Activated naive CD4-positive, alpha-beta T cell treated with anti-CD3 and anti-CD28 coated beads for 36 hours (primary cell): ENCODE measurements at regions of chr3 and their contacts with region 1.

Region 1: DNA sequence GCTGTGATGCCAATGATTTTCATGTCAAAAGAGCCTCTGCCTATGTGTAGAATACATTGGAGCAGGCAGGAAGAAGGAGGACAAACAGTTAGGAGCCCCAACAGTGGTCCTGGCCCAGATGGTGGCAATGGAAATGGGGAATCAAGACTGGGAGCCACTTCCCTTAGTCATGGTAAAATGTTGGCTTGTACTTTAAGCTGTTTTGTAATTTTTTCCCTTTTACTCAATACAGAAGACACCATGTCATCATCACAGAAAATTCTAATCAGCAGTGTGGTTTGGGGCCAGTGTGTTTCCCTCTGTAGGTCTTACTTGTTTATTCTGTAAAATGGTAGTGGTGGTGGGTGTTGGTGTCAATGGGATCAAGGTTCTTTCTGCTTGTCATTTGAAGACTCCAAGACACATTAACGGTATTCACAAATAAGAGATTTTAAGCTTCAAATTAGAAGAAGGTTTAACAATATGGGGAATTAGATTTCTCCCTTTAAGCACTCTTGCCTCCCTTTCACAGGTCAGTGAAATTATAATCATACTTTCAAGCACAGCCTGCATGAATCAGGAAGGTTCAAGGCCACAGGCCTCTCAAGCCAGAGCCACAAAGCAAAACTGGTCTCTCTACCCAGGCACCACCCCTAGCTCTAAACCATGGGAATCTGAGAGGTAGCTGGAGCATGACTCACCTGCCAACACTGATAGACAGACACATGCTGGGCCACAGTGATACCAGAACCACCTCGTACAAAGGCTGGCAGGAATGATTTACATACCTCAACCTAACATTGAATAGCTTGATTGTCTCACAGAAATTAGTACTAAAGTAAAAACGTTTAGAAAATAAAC is 24.9 kb downstream of the SIAH2 start:
- DNase-seq: peak; percentile 81
- H3K4me3 Mint-ChIP-seq: peak overlapping the region; percentile 41
- H3K27ac Mint-ChIP-seq: peak overlapping the region; percentile 99
- H3K4me1 Mint-ChIP-seq: peaks cover 77% of the 10 kb centered on the region
- H3K27me3 Mint-ChIP-seq: no peaks in the 10 kb centered on the region

Region 2: DNA sequence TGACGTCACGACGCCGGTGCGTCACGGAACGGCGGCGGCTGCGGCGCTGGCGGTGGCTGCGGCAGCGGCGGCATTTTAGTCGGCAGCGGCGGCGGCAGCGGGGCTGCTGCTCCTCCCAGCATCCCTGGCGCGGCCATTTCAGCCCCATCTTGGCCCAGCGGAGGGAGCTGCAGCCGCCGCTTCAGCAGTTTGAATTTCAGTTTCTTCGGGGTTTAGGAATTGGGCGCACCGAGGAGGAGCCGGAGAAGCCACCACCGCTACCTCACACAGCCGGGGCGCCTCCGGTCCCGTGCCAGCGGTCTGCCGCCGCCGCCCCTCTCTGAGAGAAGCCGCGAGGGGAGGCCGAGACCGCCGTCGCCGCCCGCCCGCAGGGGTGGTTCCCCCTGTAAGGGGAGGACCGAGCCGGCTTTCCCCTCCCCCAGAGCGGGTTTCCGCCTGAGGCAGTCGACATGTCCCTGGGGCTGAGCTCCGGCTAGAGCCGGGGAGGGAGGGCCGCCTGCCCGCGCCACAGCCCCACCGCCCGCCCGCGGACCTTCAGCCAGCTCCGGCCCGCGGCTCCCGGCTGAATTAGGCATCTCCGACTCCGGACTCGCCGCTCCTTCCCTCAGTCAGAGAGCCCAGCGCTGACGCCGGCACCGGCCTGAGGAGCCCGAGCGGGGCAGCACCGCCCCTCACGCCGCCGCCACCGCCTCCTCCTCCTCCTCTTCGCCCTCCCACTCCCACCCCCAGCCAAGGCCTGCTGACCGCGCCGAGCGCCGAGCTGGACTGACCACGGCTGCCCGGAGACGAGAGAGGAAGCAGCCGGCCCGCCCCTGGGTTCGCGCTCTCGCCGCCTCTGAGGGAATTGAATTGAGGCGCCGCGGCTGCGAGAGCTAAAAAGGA is 329.6 kb before region 1 on chr3 and contains the start of gene TSC22D2:
- CTCF ChIA-PET with region 1: no interaction called
- intact Hi-C with region 1: loop called (anchors 1 kb)
- DNase-seq: peak; percentile 96
- H3K4me3 Mint-ChIP-seq: peak within 1 kb of the TSS; percentile 77
- H3K27ac Mint-ChIP-seq: peak within 1 kb of the TSS; percentile 99
- H3K4me1 Mint-ChIP-seq: peaks cover 23% of the 10 kb centered on the region
- H3K27me3 Mint-ChIP-seq: no peaks in the 10 kb centered on the region
- total RNA-seq, gene TSC22D2: 13.0 to 13.7 TPM

Region 3: GRCh38 chr3:150603153-150603979 is 134.7 kb before region 1 on chr3 and contains the start of gene SELENOT:
- CTCF ChIA-PET with region 1: no interaction called
- intact Hi-C with region 1: loop called (anchors 1 kb)
- DNase-seq: peak; percentile 93
- H3K4me3 Mint-ChIP-seq: peak within 1 kb of the TSS; percentile 96
- H3K27ac Mint-ChIP-seq: peak within 1 kb of the TSS; percentile 97
- H3K4me1 Mint-ChIP-seq: peaks cover 59% of the 10 kb centered on the region
- H3K27me3 Mint-ChIP-seq: no peaks in the 10 kb centered on the region
- total RNA-seq, gene SELENOT: 68.4 to 71.2 TPM

Region 4: DNA sequence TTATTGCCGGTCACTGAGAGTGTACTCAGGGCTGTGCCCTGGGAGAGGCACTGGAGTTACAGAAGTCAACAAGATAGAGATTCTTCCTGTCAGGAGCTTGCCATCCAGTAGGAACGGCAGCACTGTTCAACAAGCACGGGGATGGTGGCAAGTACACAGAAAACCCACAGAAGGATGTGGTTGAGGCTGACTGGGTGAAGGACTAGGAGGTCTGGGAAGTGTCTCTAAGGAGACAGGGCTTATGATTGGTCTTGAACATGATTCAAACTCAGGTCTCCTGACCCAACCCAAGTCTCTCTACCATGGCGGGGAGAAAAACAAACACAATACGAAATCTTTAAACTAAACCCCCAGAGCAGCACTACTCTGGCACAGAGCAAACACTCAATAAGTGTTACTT is 71.9 kb before region 1 on chr3:
- CTCF ChIA-PET with region 1: no interaction called
- intact Hi-C with region 1: no loop called
- DNase-seq: no peak
- H3K4me3 Mint-ChIP-seq: no peak overlapping the region
- H3K27ac Mint-ChIP-seq: no peak overlapping the region
- H3K4me1 Mint-ChIP-seq: no peaks in the 10 kb centered on the region
- H3K27me3 Mint-ChIP-seq: peaks cover 12% of the 10 kb centered on the region

Region 5: GRCh38 chr3:150703299-150704134 is 34.6 kb before region 1 on chr3 and contains the start of gene ERICH6:
- CTCF ChIA-PET with region 1: no interaction called
- intact Hi-C with region 1: loop called (anchors 1 kb)
- DNase-seq: peak; percentile 88
- H3K4me3 Mint-ChIP-seq: peak within 1 kb of the TSS; percentile 96
- H3K27ac Mint-ChIP-seq: no peak within 1 kb of the TSS
- H3K4me1 Mint-ChIP-seq: peaks cover 25% of the 10 kb centered on the region
- H3K27me3 Mint-ChIP-seq: no peaks in the 10 kb centered on the region
- total RNA-seq, gene ERICH6: not detected

Region 6: DNA sequence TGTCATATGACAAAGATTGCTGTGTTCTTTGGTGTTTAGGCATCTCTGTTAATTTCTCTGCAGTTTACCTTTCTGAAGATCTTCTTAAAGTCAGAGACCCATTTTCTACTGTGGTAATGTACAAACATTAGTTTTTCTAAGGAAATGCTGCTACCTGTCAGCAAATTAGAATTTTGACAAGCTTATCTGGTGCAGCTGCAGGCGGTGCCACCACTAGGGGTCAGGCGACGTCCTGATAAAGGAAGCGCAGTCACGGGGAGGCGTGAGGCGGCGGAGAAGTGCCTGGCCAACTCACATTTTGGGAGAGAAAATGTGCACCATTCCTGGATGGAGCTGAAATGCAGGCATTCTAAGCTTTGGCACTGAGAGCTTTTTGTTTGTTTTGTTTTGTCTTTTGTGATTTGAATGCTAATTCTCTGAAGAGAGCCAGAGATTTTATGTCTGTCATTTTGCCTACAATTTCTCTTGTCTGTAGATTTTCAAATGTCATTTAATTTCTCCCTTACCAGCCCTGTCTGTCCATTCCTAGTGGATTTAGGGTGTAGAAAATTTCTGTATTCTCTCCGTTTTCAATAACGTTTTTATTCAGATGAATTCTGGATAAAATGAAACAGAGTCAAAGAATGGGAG is 49.8 kb after region 1 on chr3:
- CTCF ChIA-PET with region 1: interaction called, 5 read pairs
- intact Hi-C with region 1: loop called (anchors 1 kb)
- DNase-seq: peak; percentile 93
- H3K4me3 Mint-ChIP-seq: no peak overlapping the region
- H3K27ac Mint-ChIP-seq: no peak overlapping the region
- H3K4me1 Mint-ChIP-seq: peaks cover 49% of the 10 kb centered on the region
- H3K27me3 Mint-ChIP-seq: peaks cover 6% of the 10 kb centered on the region

Region 7: DNA sequence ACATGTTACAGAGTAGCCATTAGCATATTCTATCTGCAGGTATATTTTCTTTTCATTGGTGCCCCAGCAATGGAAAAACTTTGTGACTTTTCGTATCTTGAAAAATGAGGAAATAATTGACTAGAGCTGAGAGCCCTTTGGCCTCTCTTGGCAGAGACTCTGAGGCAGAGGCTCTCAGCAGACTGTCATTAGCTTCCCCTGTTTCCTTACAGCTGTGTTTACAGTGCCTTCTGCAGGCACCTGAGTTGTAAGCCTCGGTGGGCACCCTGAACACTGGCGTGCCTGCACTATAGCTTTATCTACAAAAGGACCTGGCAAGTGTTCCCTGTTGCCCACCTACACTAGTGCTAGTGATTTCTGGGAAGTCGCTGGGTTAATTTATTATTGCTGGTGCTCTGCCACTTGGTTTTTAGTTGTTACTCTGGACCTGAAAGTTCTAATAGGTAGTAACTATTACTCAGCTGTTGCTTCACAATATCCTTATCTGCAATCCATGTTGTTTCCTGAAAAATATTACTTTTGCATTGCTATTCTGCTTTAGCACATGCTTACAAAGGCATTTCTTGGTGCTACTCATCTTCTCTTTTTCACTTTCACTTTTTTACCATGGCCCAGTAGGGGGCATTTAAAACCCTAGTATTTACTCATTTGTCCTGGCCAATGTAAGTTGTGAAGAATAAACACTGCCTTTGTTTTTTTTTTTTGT is 472.7 kb after region 1 on chr3:
- CTCF ChIA-PET with region 1: no interaction called
- intact Hi-C with region 1: loop called (anchors 1 kb)
- DNase-seq: peak; percentile 31
- H3K4me3 Mint-ChIP-seq: peak overlapping the region; percentile 48
- H3K27ac Mint-ChIP-seq: peak overlapping the region; percentile 90
- H3K4me1 Mint-ChIP-seq: peaks cover 56% of the 10 kb centered on the region
- H3K27me3 Mint-ChIP-seq: no peaks in the 10 kb centered on the region

Region 8: DNA sequence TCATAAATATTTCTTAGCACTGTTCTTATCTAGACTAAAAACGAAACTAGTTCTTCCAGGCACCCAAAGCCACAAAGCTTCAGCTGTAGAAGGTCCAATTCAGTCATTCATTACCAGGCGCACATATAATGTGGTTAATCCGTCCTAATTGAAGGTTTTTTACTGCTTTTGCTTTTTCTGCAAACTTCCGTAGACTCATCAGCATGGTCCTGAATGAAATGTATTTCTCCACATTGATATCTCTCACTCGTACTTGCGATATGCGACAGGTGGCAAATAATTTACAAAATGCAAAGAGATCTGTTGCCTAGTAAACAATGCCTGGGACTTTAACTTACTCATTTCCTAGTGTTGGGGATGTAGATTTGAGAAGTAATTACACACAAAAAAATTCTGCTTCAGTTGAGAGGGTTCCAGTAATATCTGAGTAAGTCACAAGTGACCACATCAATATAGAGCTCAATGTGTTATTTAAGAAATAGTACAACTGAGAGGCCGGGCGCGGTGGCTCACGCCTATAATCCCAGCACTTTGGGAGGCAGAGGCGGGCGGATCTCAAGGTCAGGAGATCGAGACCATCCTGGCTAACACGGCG is 1455.7 kb after region 1 on chr3:
- CTCF ChIA-PET with region 1: no interaction called
- intact Hi-C with region 1: loop called (anchors 5 kb)
- DNase-seq: peak; percentile 57
- H3K4me3 Mint-ChIP-seq: peak overlapping the region; percentile 72
- H3K27ac Mint-ChIP-seq: peak overlapping the region; percentile 88
- H3K4me1 Mint-ChIP-seq: peaks cover 82% of the 10 kb centered on the region
- H3K27me3 Mint-ChIP-seq: no peaks in the 10 kb centered on the region